Tibial artery (tissue), 4 donors: ENCODE measurements at regions of chr1 and their contacts with region 1.

Region 1: DNA sequence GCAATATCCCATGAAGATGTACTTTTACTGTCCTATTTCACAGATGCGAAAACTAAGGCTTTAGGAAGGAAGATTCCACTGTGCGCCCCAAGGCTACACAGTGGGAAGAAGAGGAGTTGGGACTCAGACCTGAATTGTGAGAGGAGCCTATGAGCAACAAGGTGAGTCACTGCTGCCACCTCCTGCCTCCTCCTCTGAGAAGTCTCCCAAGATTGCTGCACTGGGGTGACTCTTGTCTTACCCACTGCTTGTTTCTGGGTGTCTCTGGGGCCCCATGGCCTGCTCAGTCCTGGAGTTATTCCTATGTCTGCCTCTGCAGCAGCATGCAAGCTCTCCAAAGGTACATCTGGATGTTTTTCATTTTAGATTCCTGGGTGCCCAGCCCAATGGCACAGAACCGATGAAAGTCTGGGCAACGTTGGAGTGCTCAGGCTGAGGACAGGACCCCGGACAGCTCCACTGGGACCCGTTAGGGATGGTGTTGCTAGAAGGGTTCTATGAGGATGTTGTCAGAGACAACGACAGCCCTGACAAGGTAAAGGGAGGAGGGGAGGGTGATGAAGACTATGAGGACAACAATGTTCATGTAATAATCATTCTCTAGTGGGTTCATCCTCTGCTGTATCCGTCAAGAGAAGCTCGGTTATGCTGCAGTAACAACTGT is 11.0 kb upstream of the C1QA start:
- DNase-seq: no peak
- H3K4me3 ChIP-seq: no peak overlapping the region
- H3K27ac ChIP-seq: no peak overlapping the region
- H3K4me1 ChIP-seq: no peaks in the 10 kb centered on the region
- H3K27me3 ChIP-seq: peaks cover 0 to 90% of the 10 kb centered on the region in 2 donors
- CTCF ChIP-seq: no peak

Region 2: DNA sequence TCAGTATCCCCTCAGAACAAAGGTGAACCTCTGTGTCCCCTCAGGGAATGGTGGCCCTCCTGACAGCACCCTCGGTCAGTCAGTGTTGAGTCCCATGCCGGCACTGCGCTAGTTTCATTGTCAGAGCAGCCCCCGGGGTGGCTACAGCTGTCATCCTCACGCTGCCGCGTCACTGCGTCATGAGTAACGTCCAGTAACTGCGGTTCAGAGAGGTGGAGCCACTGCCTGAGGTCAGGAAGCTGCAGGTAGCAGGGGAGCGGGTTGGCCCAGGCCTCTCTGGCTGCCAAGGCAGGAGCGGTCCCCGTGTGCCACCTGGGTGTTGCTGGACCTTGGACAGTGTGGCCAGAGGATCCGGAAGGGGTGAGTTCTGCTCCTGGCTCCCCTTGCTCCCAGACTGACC is 462.3 kb before region 1 on chr1:
- intact Hi-C with region 1: no loop called
- DNase-seq: no peak
- H3K4me3 ChIP-seq: no peak overlapping the region
- H3K27ac ChIP-seq: no peak overlapping the region
- H3K4me1 ChIP-seq: no peaks in the 10 kb centered on the region
- H3K27me3 ChIP-seq: peaks cover 0 to 6% of the 10 kb centered on the region in 2 donors
- CTCF ChIP-seq: no peak

Region 3: DNA sequence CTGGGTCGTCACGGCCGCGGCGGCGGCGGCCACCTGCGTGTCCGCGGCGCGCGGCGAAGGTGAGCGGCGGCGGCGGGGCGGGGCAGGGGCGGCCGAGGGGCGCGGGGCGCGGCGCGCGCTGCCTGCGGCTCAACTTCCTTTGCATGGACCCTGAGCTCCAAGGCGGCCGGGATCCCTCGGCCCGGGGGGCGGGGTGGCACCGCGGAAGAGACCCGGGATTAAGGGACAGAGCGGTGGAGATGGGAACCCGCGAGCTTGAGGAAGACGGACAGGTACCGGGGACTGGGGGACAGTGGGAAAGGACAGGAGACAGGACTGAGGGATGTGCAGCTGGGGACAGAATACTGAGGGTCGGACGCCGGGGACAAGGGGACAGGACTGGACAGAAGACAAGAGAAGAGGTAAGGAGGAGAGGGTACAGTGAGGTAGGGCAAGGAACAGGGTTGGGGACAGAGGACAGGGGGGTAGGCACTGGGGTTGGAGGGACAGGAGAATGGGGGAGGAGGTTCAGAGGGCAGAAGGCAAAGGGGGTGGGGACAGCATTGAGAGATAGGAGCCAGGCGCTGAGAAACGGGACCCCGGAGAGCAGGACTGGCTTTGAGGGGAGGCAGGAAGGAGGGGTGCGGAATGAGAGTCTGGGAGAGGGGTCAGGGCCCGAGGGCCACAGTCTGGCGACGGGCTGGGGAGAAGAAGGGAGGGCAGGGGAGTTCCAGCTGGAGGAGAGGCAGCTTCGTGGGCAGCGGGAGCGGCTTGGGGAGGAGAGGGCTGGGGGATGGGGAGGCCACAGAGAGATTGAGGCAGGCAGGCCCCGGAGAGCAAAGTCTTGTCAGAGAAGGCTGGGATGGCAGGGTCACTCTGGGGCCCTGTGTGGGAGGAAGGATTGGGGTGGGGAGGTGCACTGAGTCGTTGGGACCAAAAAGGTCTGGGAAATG is 61.5 kb before region 1 on chr1:
- intact Hi-C with region 1: loop called (anchors 2 kb)
- DNase-seq: no peak
- H3K4me3 ChIP-seq: no peak overlapping the region
- H3K27ac ChIP-seq: no peak overlapping the region
- H3K4me1 ChIP-seq: peaks cover 0 to 11% (median 5%) of the 10 kb centered on the region in 4 donors
- H3K27me3 ChIP-seq: peaks cover 0 to 93% of the 10 kb centered on the region in 2 donors
- CTCF ChIP-seq: no peak

Region 4: GRCh38 chr1:22704440-22705067 is 79.2 kb after region 1 on chr1:
- intact Hi-C with region 1: no loop called
- DNase-seq: peak; percentile 86 to 92
- H3K4me3 ChIP-seq: no peak overlapping the region
- H3K27ac ChIP-seq: no peak overlapping the region
- H3K4me1 ChIP-seq: peaks cover 0 to 3% (median under 1%) of the 10 kb centered on the region in 4 donors
- H3K27me3 ChIP-seq: peaks cover 0 to 8% of the 10 kb centered on the region in 2 donors
- CTCF ChIP-seq: peak; percentile 91 to 93

Region 5: GRCh38 chr1:23514111-23514679 is 888.8 kb after region 1 on chr1:
- intact Hi-C with region 1: loop called (anchors 10 kb)
- DNase-seq: no peak
- H3K4me3 ChIP-seq: no peak overlapping the region
- H3K27ac ChIP-seq: no peak overlapping the region
- H3K4me1 ChIP-seq: no peaks in the 10 kb centered on the region
- H3K27me3 ChIP-seq: no peaks in the 10 kb centered on the region
- CTCF ChIP-seq: no peak